ENCODE measurements at regions of chr20 and their contacts with region 1.

Region 1: DNA sequence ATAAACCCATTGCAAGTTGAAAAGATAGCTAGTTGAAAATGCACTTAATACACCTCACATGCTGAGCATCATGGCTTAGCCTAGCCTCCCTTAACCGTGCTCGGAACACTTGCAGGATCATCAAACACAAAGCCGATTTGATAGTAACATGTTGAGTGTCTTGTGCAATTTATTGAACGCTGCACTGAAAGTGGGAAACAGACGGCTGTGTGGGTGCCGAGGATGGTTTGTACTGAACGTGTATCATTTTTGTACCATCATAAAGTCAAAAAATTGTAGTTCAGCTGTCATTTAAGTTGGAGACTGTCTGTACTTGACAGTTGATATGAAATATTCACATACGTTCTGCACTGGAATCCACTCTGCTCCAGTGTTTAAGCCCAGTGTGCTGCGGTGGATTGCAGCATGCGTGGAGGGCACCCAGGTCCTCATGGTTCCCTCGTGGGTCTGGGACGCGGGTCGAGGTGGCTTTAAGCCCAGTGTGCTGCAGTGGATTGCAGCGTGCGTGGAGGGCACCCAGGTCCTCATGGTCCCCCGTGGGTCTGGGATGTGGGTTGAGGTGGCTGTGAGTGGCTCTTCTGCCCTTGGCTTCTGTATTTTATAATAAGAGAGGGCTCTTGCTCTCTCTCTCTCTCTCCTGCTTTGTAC is 77.0 kb downstream of the CDH4 start:
- DNase-seq: no peak
- ATAC-seq: no peak
- H3K4me3 ChIP-seq: no peak overlapping the region
- H3K27ac ChIP-seq: no peak overlapping the region
- H3K4me1 ChIP-seq: no peaks in the 10 kb centered on the region
- H3K27me3 ChIP-seq: no peaks in the 10 kb centered on the region
- CTCF ChIP-seq: no peak
- EP300 ChIP-seq: no peak
- POLR2A ChIP-seq: no peak
- RAD21 ChIP-seq: no peak

Region 2: GRCh38 chr20:61376541-61377244 is 47.7 kb after region 1 on chr20:
- CTCF ChIA-PET with region 1: no interaction called
- POLR2A ChIA-PET with region 1: no interaction called
- RAD21 ChIA-PET with region 1: no interaction called
- SMC1A ChIA-PET with region 1: no interaction called
- in situ Hi-C with region 1: loop called (anchors 5 kb)
- intact Hi-C with region 1: no loop called
- DNase-seq: no peak
- ATAC-seq: no peak
- H3K4me3 ChIP-seq: no peak overlapping the region
- H3K27ac ChIP-seq: no peak overlapping the region
- H3K4me1 ChIP-seq: no peaks in the 10 kb centered on the region
- H3K27me3 ChIP-seq: no peaks in the 10 kb centered on the region
- CTCF ChIP-seq: no peak
- EP300 ChIP-seq: no peak
- POLR2A ChIP-seq: no peak
- RAD21 ChIP-seq: no peak

Measured in GM12878 (cell line).